ENCODE measurements at regions of chr3 and their contacts with region 1.

Region 1: GRCh38 chr3:97719156-97719821 is 45.3 kb upstream of the ARL6 start:
- DNase-seq: peak; percentile 49
- CTCF ChIP-seq: peak; percentile 78

Region 2: GRCh38 chr3:96863129-96863740 is 856.1 kb before region 1 on chr3:
- in situ Hi-C with region 1: loop called (anchors 25 kb)
- DNase-seq: peak; percentile 3
- CTCF ChIP-seq: peak; percentile 28

Measured in GM13976 (cell line).